ENCODE measurements at regions of chr6 and their contacts with region 1.

Region 1: GRCh38 chr6:166402582-166403277 is 20.0 kb upstream of the MPC1 start:
- DNase-seq: no peak
- H3K4me3 ChIP-seq: no peak overlapping the region
- H3K27ac ChIP-seq: no peak overlapping the region
- H3K27me3 ChIP-seq: peaks cover 7% of the 10 kb centered on the region
- CTCF ChIP-seq: no peak

Region 2: DNA sequence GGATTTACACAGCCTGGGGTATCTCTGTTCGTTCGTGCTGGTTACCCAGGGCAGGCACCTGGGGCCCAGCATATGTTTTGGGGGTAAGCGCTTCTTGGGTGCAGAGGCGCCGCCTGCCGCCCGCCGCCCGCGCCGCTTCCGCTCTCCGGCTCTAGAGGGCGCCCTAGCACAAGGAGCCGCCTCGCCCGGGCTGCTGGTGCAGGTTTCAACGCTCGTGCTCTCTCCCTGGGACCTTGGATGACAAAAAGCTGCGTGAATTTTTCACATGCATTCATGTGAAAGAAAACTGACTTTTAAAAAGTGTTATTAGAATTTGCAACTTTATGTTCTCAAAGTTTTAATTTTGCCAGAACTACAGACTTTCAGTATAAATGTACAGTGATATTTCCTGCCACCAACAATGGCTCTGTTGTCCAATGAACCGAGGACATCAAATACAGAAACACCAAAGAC is 127.0 kb before region 1 on chr6:
- CTCF ChIA-PET with region 1: interaction called, 122 read pairs
- POLR2A ChIA-PET with region 1: no interaction called
- DNase-seq: no peak
- H3K4me3 ChIP-seq: no peak overlapping the region
- H3K27ac ChIP-seq: no peak overlapping the region
- H3K27me3 ChIP-seq: peaks cover 3% of the 10 kb centered on the region
- CTCF ChIP-seq: peak; percentile 99

Region 3: GRCh38 chr6:166281104-166281503 is 121.6 kb before region 1 on chr6:
- CTCF ChIA-PET with region 1: interaction called, 122 read pairs
- POLR2A ChIA-PET with region 1: no interaction called
- DNase-seq: no peak
- H3K4me3 ChIP-seq: no peak overlapping the region
- H3K27ac ChIP-seq: no peak overlapping the region
- H3K27me3 ChIP-seq: peaks cover 13% of the 10 kb centered on the region
- CTCF ChIP-seq: no peak

Region 4: DNA sequence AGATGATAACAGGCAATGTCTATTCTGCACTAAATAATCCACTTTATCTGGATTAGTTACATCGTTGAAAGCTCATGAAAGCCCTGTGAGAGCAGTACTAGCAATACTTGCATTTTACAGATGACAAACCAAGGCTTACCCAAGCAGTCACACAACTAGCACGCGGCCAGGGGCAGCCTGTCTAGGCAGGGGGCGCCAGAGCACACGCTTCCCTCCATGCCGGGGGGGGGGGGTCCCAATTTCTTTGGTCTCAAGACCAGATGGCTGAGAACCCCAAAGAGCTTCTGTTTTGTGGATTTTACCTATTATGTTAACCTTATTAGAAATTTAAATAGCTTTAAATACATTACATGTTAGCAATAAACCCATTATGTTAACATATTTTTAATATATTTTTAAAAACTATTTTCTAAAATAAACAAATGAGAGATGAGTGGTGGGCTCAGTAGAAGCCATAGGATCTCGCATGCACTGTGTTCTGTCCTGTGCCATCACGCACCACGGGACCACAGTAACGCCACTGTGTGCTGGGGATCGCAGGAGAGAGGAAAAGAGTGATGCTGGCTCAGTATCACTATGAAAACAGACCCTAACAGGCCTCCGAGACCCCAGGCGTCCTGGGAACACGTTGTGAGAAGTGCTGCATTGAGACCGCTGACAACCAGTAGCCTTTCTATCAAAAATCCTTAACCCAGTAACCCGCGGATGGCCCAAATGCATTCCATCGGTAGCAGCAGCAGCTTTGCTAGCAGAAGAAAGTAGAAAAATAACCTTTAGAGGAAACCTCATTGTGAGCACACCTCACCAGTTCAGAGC is 89.3 kb before region 1 on chr6:
- CTCF ChIA-PET with region 1: interaction called, 58 read pairs
- POLR2A ChIA-PET with region 1: no interaction called
- DNase-seq: no peak
- H3K4me3 ChIP-seq: no peak overlapping the region
- H3K27ac ChIP-seq: no peak overlapping the region
- H3K27me3 ChIP-seq: peaks cover 17% of the 10 kb centered on the region
- CTCF ChIP-seq: peak; percentile 78

Region 5: DNA sequence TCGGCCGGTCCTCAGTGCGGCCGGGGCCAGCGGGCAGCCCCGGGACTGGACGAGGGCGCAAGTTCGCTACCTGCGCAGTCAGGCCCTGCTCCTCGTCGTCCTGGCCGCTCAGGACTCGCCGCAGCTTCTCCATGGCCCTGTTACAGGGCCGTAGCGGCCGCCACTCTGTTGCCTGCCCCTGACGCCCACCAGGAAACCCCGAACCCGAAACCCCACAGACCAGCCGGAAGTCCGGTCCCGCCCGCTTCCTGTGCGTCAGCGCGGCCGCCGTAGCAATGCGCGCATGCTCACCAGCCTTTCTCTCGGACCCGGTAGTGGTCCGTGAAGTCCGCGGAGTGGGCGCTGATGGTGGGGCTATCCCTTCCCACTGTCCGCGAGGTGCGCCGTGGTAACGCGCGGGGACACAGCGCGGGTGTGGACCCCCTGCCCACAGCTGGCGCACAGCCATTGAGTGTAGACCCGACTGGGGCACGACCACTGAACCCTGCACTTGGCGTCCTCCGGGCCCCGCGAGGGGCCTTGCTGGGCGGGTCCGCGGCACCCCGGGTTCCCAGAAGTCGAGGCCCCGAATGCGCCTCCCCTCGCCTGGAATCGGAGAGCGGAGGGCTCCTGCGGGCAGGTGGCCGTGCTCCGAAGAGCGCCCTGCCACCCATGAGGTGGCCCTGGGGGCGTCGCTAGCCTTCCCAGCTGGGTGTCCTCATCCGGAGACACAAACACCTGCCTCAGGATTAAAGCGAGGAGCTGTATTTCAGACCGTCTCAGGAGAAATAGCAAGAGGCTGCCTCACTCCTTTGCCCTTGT is 60.2 kb before region 1 on chr6 and contains the start of gene SFT2D1:
- CTCF ChIA-PET with region 1: no interaction called
- POLR2A ChIA-PET with region 1: no interaction called
- DNase-seq: peak; percentile 66
- H3K4me3 ChIP-seq: peak within 1 kb of the TSS; percentile 99
- H3K27ac ChIP-seq: peak within 1 kb of the TSS; percentile 61
- H3K27me3 ChIP-seq: no peaks in the 10 kb centered on the region
- CTCF ChIP-seq: no peak
- polyA plus RNA-seq, gene SFT2D1: 54.8 and 76.5 TPM in 2 replicates